Activated T-helper 2 cell treated with anti-CD3 and anti-CD28 coated beads, Interferon-gamma antibody, Interleukin-2, Interleukin-4, amounts not matched to agents 10 μg/mL and 5 μg/mL and 100 μg/mL, durations not matched to agents 14 hours and 24 hours and 36 hours (primary cell): ENCODE measurements at regions of chr3 and their contacts with region 1.

Region 1: GRCh38 chr3:125194849-125195601 is 17.5 kb downstream of the SLC12A8 start:
- DNase-seq: no peak
- H3K4me3 Mint-ChIP-seq: no peak overlapping the region
- H3K27ac Mint-ChIP-seq: no peak overlapping the region
- H3K4me1 Mint-ChIP-seq: peaks cover 7% of the 10 kb centered on the region
- H3K27me3 Mint-ChIP-seq: peaks cover 44% of the 10 kb centered on the region

Region 2: DNA sequence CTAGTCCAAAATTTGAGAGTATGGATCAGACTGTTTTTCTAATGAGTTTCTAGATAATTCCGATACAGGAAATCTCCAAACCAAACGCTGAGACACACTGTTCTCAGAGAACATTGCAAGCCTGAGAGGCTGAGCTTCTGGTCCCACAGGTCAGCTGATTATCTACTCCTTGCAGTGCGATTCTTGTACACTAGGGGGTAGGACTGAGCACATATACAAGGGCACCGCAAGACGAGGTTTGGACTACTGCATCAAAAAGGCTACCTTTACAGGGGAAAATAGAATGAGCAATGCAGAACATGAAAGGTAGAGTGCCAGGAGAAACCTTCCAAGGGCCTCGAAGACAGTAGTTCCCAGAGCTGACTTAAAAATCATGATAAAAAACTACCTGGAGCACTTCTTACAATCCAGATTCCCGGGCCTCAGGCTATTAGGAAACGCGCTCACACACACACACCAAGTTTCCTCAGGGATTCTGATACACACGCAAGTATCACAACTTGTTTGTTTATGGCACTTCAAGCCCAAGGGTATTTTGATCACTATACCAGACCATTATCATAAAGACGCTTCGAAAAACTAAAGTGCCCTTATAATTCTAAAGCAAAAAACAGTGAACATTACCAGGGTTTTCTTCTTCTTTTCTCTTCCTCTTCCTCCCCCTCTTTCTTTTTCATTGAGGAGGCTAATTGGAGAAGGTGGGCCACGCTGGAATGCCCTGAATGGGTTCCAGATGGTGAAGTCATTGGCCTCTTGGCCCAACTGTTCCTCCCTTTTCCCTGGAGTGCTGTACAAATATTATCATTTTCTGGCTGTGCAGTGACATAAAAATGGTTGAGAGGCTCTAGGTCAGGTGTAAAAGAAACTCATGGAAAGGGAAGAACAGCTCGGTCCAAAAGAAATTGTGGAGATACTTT is 44.2 kb before region 1 on chr3:
- intact Hi-C with region 1: loop called (anchors 5 kb)
- DNase-seq: peak; percentile 52
- H3K4me3 Mint-ChIP-seq: no peak overlapping the region
- H3K27ac Mint-ChIP-seq: no peak overlapping the region
- H3K4me1 Mint-ChIP-seq: peaks cover 22% of the 10 kb centered on the region
- H3K27me3 Mint-ChIP-seq: peaks cover 38% of the 10 kb centered on the region

Region 3: GRCh38 chr3:125428216-125428830 is 233.3 kb after region 1 on chr3:
- intact Hi-C with region 1: no loop called
- DNase-seq: no peak
- H3K4me3 Mint-ChIP-seq: no peak overlapping the region
- H3K27ac Mint-ChIP-seq: no peak overlapping the region
- H3K4me1 Mint-ChIP-seq: no peaks in the 10 kb centered on the region
- H3K27me3 Mint-ChIP-seq: peaks cover 4% of the 10 kb centered on the region

Region 4: GRCh38 chr3:125651244-125651643 is 456.2 kb after region 1 on chr3:
- intact Hi-C with region 1: no loop called
- DNase-seq: no peak
- H3K4me3 Mint-ChIP-seq: no peak overlapping the region
- H3K27ac Mint-ChIP-seq: no peak overlapping the region
- H3K4me1 Mint-ChIP-seq: no peaks in the 10 kb centered on the region
- H3K27me3 Mint-ChIP-seq: peaks cover 6% of the 10 kb centered on the region